ENCODE measurements at regions of chr12 and their contacts with region 1.

Region 1: DNA sequence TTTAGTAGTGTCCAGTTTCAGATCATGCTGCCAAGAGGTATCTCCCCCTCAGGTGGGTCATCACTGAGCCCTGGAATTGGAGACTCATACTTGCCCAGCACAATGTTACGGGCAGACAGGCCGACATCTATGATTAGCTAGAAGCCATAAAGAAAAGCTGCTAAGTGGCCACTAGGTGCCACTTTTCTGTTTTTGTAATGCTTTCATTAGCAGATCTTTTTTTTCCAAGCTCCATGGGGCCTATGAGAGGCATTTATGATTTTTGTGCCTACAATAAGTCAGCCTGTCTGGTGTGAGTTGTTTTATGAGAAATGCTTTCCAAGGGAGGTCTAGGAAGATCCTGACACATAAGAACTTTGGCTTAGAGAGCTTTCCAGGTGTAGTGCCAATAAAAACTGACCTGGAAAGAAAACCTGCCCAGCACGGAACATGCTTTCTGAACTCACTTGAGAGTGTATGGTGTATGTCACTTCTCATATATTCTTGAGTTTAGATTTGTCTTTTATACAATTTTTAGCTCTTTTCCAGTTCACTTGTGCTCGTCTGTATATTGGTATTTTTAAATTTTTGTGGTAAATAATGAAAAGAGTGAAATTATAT is 21.8 kb upstream of the SMCO2 start:
- DNase-seq: peak; percentile 49
- ATAC-seq: peak; percentile 92
- H3K4me3 ChIP-seq: no peak overlapping the region
- H3K27ac ChIP-seq: no peak overlapping the region
- H3K4me1 ChIP-seq: no peaks in the 10 kb centered on the region
- H3K27me3 ChIP-seq: no peaks in the 10 kb centered on the region
- CTCF ChIP-seq: peak; percentile 42 to 60 (median 60); a peak in 5 of 6 replicates
- POLR2A ChIP-seq: no peak
- RAD21 ChIP-seq: peak; percentile 58

Region 2: GRCh38 chr12:27652174-27652763 is 227.5 kb after region 1 on chr12:
- CTCF ChIA-PET with region 1: interaction called, 4 read pairs
- POLR2A ChIA-PET with region 1: no interaction called
- RAD21 ChIA-PET with region 1: no interaction called
- intact Hi-C with region 1: loop called (anchors 2 kb)
- DNase-seq: peak; percentile 58
- ATAC-seq: peak; percentile 78
- H3K4me3 ChIP-seq: no peak overlapping the region
- H3K27ac ChIP-seq: no peak overlapping the region; the same call in 1 of the 2 replicates
- H3K4me1 ChIP-seq: no peaks in the 10 kb centered on the region
- H3K27me3 ChIP-seq: no peaks in the 10 kb centered on the region
- CTCF ChIP-seq: peak; percentile 68 to 87 (median 82); a peak in 5 of 6 replicates
- POLR2A ChIP-seq: no peak
- RAD21 ChIP-seq: peak; percentile 83

Region 3: DNA sequence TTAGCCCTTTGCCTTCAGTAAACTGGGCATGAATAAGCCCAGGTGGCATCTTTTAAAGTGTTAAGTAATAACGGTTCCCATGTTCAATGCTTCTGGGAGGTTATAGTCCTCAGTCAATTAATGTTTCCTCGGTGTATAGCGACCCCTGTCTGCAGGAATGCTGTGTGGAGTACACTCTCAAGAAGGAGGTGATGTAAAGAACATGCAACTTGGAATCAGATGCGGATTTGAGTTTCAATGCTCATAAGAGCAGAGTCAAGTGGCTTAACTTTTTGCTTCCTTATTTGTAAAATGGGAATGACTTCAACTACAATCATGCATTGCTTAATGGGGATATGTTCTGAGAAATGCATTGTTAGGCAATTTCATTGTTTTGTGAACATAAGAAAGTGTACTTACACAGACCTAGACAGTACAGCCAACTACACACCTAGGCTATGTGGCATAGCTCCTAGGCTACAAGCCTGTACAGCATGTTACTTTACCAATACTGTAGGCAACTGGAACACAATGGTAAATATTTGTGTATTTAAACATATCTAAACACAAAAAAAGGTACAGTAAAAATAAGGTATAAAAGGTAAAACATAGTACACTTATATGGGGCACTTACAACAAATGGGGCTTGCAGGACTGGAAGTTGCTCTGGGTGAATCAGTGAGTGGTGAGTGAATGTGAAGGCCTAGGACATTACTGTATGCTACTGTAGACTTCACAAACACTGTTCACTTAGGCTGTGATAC is 279.1 kb after region 1 on chr12:
- CTCF ChIA-PET with region 1: interaction called, 5 read pairs
- POLR2A ChIA-PET with region 1: no interaction called
- RAD21 ChIA-PET with region 1: interaction called in 1 of 2 experiments, 3 read pairs
- intact Hi-C with region 1: loop called (anchors 5 kb)
- DNase-seq: peak; percentile 87
- ATAC-seq: peak; percentile 99
- H3K4me3 ChIP-seq: no peak overlapping the region
- H3K27ac ChIP-seq: no peak overlapping the region
- H3K4me1 ChIP-seq: no peaks in the 10 kb centered on the region
- H3K27me3 ChIP-seq: no peaks in the 10 kb centered on the region
- CTCF ChIP-seq: peak; percentile 73 to 97 (median 89)
- POLR2A ChIP-seq: no peak
- RAD21 ChIP-seq: peak; percentile 86

Measured in HCT116 (cell line).